Right cardiac atrium (tissue), 5 donors: ENCODE measurements at regions of chr4 and their contacts with region 1.

Region 1: DNA sequence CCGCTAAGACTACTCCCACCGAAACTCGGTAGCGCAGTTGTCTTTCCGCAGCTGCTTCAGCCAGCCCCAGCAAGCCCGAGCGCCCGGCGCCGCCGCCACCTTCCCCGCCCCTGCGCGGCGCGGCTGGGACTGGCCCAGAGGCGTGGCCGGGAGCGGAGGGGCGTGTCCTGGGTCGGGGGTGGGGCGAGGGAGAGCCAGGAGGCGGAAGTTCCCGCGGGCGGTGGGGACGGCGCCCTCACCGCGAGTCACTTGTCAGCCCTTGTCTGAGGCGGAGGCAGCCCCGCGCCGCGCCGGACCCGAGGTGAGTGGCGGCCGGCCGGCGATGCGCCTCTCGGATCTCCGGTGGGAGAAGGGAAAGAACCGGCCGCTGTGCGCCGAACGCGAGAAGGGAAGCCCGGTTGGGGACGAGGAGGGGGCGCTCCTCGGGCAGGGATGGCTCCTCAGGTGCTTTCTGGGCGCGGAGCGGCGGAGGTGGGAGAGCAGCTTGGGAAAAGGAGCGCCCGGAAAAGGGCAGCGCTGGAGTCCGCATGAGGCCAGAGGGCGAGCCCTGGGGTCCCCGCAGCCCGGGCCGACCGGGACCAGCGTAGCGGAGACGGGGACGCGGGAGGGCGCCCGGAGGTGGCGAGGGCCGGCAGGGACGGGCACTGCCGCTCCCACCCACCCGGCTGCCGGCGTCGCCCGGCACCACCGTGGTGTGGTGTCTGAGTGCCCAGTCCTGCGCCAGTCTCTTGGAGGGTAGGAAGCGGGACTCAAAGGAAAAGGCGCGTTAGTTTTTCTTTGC is at the start of gene PDLIM5:
- DNase-seq: peak; percentile 91 to 96 (median 96)
- ATAC-seq: peak; percentile 97
- H3K4me3 ChIP-seq: peak within 1 kb of the TSS; percentile 98
- H3K27ac ChIP-seq: peak within 1 kb of the TSS; percentile 98
- H3K4me1 ChIP-seq: no peaks in the 10 kb centered on the region
- H3K27me3 ChIP-seq: no peaks in the 10 kb centered on the region
- total RNA-seq, gene PDLIM5: 511 to 778 (median 584) TPM

Region 2: DNA sequence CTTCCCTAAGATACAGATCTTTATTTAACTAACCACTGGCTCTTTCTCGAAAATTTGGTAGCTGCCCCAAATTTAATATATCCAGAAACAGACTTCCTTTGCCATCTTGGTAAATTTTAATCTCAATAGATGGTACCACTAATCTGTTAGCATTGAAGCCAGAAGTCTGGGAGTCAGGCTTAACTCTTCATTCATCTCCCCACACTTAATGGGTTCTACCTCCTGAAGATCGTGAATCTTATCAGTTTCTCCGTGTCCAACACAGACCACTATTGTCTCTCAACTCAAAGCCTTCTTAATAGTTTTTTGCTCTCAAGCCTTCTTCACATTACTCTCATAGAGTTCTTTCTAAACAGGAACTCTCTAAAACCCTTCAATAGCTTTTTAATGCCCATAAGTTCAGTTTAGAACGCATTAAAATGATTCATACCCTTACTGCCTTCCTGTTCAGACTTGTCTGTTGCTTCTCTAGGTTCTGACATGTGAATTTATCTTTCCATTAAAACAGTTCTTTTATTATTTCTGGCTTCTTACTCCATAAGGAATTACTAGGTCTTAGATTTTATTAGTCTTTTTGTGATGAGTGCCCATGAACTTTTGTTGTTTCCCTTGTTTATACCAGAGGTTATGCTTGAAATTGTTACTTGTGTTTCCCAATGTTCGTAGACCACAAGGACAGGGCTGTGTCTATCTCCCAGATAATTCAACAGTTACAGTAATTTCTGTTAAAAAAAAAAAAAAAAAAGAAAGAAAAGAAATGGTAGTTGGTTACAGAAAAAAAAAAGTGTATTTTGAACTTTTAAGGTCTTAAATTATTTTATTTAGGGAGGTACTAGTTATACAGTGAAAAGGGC is 189.5 kb before region 1 on chr4:
- intact Hi-C with region 1: no loop called
- DNase-seq: no peak
- ATAC-seq: no peak
- H3K4me3 ChIP-seq: no peak overlapping the region
- H3K27ac ChIP-seq: no peak overlapping the region
- H3K4me1 ChIP-seq: no peaks in the 10 kb centered on the region
- H3K27me3 ChIP-seq: no peaks in the 10 kb centered on the region

Region 3: GRCh38 chr4:94406668-94407437 is 45.0 kb before region 1 on chr4:
- intact Hi-C with region 1: loop called in 3 of 4 experiments (anchors 2 to 5 kb)
- DNase-seq: peak; percentile 61 to 84 (median 62)
- ATAC-seq: peak; percentile 59 to 60
- H3K4me3 ChIP-seq: no peak overlapping the region
- H3K27ac ChIP-seq: no peak overlapping the region
- H3K4me1 ChIP-seq: no peaks in the 10 kb centered on the region
- H3K27me3 ChIP-seq: no peaks in the 10 kb centered on the region

Region 4: DNA sequence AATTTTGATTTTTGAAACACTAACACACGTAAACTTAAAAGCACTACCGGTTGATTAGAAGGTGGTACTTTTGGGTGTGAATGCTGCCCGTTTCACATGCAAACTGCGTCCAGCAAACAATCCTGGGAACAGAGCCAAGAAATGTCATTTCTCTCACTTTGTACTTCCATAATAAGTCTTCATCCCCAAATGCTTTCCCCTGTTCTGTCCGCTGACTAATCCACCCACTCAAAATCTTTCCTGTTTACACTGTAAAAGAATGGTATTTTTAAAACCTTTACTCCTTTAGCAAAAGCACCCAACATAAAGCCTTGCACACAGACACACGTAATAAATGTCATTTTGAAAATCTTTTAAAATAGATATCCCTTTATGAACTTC is 39.2 kb before region 1 on chr4:
- intact Hi-C with region 1: loop called in 3 of 4 experiments (anchors 2 to 5 kb)
- DNase-seq: no peak
- ATAC-seq: peak in 1 of 2 donors; percentile 37
- H3K4me3 ChIP-seq: no peak overlapping the region
- H3K27ac ChIP-seq: peak overlapping the region; percentile 79
- H3K4me1 ChIP-seq: peaks cover 2% of the 10 kb centered on the region
- H3K27me3 ChIP-seq: no peaks in the 10 kb centered on the region

Region 5: DNA sequence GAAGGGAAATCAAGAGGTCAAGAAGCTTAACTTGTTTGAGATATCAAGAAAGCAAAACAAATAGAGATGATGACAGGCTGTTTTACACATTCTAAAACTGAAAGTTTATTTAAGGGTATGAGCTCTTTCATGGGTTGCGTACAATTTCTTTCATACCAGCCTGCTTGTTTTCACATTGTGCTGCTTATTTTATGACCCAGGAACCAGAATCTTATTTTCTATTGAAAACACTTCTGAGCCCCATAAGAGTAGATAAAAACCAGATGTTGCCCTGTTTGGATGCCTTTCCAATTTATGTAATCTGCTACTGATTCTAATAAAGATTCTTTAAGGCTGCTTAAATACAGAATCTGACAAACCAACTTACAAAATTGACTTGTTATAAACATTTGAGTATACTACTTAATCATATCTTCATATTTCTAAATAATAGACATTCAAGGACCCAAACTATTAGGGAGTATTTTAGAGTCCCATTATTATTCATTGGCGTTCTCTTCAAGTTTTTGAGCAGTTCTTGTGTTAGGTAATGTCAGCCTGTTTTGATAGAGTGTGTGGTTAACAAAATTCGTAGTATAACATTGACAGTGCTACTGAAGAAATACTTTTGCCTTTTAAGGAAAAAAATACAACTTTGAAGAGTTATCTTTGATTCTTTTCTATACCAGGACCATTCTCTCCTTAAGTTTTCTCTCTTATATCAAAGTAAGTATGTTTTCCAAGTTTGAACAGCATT is 74.3 kb after region 1 on chr4:
- intact Hi-C with region 1: no loop called
- DNase-seq: no peak
- ATAC-seq: peak in 1 of 2 donors; percentile 45
- H3K4me3 ChIP-seq: peak overlapping the region; percentile 15
- H3K27ac ChIP-seq: no peak overlapping the region
- H3K4me1 ChIP-seq: peaks cover 8% of the 10 kb centered on the region
- H3K27me3 ChIP-seq: no peaks in the 10 kb centered on the region

Region 6: DNA sequence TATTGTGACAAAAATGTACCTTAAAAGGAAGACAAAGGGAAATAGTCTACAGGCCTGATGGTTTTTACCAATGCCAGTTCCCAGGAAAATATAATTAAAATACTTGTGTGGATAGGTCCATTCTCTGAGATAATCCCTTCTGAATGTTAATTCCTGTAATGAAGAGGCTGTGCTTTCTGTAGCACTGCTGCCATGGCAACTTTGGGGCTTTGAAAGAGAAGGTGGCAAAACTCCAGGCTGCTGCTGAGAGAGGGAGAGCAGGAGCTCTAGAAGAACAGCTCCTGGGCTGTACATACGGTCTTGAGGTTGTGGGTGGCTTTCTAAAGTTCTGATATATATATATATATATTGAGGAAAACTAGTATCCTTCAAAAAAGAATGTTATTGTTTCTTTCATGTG is 125.3 kb after region 1 on chr4:
- intact Hi-C with region 1: loop called in 1 of 4 experiments (anchors 10 kb)
- DNase-seq: peak; percentile 44 to 73 (median 52)
- ATAC-seq: peak; percentile 69 to 83
- H3K4me3 ChIP-seq: no peak overlapping the region
- H3K27ac ChIP-seq: no peak overlapping the region
- H3K4me1 ChIP-seq: peaks cover 3% of the 10 kb centered on the region
- H3K27me3 ChIP-seq: no peaks in the 10 kb centered on the region

Region 7: GRCh38 chr4:94595879-94596483 is 144.1 kb after region 1 on chr4:
- intact Hi-C with region 1: loop called in 2 of 4 experiments (anchors 10 kb)
- DNase-seq: no peak
- ATAC-seq: no peak
- H3K4me3 ChIP-seq: no peak overlapping the region
- H3K27ac ChIP-seq: no peak overlapping the region
- H3K4me1 ChIP-seq: peaks cover 1% of the 10 kb centered on the region
- H3K27me3 ChIP-seq: no peaks in the 10 kb centered on the region